ENCODE measurements at regions of chr9 and their contacts with region 1.

Region 1: GRCh38 chr9:124420991-124421543 is 5.8 kb upstream of the PSMB7 start:
- DNase-seq: no peak
- CTCF ChIP-seq: no peak

Region 2: DNA sequence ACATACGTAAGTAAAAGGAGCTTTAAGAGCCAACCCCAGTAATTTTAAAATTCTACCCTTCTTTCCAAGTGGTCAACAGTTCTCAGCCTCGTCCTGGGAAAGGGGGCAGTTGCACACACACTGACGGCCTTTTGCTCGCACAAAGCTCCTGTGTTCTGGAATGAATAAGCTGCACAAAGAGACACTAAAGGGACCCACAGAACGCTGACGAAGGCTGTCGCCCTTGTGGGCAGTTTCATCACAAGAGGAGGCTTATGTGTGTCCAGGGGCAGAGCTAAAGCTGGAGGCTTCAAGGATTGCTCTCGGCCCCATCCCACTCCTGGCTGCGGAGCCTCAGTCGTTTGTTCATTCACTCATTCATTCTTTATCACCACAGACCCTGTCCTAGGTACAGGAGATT is 230.3 kb before region 1 on chr9:
- CTCF ChIA-PET with region 1: no interaction called
- POLR2A ChIA-PET with region 1: no interaction called
- DNase-seq: no peak
- CTCF ChIP-seq: no peak

Region 3: DNA sequence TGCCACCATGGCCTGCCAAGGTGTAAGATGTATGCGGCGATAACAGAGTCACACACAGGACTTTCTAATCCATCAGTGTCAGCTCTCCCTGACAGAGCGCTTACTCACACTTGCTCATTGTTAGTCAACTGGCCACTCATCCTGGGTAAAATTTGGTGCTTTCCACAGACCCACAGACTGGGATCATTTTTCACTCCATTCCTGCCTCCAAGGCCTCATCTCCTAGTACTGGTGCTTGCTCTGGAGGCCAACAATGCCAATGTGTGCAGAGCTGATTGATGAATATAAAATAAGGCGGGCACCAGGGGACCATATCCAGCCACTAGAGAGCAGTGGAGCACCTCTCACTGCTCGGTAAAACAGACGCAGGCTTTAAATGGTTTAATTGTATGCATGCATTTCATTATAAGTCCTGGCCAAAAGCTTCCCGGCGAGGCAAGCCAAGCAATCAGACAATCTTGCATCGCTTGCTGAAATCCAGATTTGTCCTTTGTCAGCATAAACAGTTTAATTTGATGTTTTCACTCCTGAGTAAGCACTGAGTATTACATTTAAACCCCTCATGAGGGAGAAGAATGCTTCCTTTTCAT is 28.1 kb before region 1 on chr9:
- CTCF ChIA-PET with region 1: interaction called, 29 read pairs
- POLR2A ChIA-PET with region 1: no interaction called
- DNase-seq: no peak
- CTCF ChIP-seq: no peak

Region 4: GRCh38 chr9:124441291-124441690 is 20.2 kb after region 1 on chr9:
- CTCF ChIA-PET with region 1: interaction called, 50 read pairs
- POLR2A ChIA-PET with region 1: no interaction called
- DNase-seq: no peak
- CTCF ChIP-seq: no peak

Region 5: DNA sequence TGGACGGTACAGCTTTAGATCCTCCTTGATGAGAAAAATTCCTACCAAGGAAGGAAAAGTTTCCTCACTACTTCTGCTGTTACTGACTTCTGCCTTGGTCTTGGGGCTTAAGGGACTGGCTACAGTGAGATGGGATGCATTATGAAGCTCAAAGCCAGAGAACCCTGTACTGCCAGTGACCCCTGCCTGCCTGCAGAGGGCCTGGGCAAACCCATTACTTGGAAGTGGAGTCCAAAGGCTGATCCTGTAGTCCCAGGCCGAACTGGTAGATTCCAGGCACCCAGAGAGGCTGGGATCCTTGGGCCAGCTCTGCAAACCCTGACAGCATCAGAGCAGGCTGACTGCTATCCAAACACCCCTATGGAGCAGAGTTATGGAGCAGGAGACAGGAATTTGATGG is 111.8 kb after region 1 on chr9:
- CTCF ChIA-PET with region 1: interaction called, 115 read pairs
- POLR2A ChIA-PET with region 1: no interaction called
- DNase-seq: no peak
- CTCF ChIP-seq: no peak

Measured in GM10248 (cell line).